ENCODE measurements at regions of chr15 and their contacts with region 1.

Region 1: DNA sequence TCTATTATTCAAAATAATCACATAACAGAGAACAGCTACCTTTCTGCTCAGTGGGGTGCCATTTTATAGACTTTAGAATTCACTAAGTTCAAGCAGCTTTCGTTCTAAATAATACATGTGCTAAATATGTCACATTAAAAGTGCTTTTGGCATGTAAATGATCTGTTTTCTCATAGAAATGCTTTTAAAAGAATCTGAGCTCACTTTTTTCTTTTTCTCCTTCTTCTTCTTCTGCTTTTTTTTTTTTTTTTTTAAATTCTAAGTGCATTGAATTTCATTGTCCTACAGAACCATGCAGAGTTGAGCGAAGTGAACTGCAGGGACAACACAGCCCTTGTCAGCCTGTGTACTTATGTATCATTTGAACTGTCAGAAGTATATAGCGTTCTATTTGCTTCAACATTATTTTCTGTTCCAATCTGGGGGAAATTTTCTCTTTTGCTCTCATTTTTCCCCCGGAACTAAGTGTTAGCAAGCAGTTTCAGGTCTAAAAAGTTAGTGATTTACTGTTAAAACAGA is 193.8 kb upstream of the TMCO5A start:
- DNase-seq: no peak
- H3K4me3 ChIP-seq: no peak overlapping the region
- H3K27ac ChIP-seq: no peak overlapping the region
- H3K4me1 ChIP-seq: no peaks in the 10 kb centered on the region
- CTCF ChIP-seq: no peak

Region 2: DNA sequence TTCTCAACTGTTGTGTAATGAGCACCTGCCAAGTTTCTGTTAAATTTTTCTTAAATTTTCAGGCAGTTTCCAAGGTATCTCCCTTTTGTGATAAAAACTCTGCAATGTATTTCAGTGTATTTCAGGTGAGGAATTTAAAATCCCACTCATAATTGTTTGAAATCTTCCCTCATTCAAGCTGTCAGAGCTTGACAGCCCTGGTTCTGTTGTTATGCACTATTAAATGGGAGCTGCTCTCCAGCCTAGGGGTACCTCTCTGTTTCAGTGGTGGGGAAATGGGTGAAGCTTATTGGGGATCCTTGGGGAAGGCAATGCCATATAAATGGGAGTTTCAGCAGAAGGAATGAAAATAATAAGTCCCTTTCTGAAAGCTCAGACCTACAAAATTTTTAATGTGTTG is 15.7 kb after region 1 on chr15:
- CTCF ChIA-PET with region 1: no interaction called
- POLR2A ChIA-PET with region 1: no interaction called
- intact Hi-C with region 1: no loop called
- DNase-seq: no peak
- H3K4me3 ChIP-seq: no peak overlapping the region
- H3K27ac ChIP-seq: no peak overlapping the region
- H3K4me1 ChIP-seq: no peaks in the 10 kb centered on the region
- CTCF ChIP-seq: no peak

Region 3: DNA sequence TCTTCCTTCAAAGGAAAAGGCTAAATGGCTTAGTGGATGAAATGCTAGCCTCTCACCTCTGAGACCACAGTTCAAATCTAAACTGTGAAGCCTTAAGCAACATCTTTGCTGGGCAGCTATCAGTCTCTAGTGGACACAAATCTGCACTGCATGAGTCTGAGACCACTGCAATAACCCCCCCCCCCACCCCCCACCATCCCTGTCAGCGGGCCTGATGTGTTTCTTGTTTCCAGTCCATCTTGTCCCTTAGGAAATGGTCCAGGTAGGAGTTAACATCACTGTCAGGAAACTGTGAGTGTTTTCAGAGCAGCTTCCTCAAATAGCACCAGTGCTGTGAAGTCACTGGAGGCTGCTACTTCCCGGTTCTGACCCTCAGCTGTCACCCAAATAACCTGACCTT is 53.2 kb after region 1 on chr15:
- CTCF ChIA-PET with region 1: no interaction called
- POLR2A ChIA-PET with region 1: no interaction called
- intact Hi-C with region 1: loop called (anchors 5 kb)
- DNase-seq: no peak
- H3K4me3 ChIP-seq: no peak overlapping the region
- H3K27ac ChIP-seq: no peak overlapping the region
- H3K4me1 ChIP-seq: no peaks in the 10 kb centered on the region
- CTCF ChIP-seq: no peak

Measured in OCI-LY7 (cell line).